Heart left ventricle (tissue), 16 donors: ENCODE measurements at regions of chr6 and their contacts with region 1.

Region 1: DNA sequence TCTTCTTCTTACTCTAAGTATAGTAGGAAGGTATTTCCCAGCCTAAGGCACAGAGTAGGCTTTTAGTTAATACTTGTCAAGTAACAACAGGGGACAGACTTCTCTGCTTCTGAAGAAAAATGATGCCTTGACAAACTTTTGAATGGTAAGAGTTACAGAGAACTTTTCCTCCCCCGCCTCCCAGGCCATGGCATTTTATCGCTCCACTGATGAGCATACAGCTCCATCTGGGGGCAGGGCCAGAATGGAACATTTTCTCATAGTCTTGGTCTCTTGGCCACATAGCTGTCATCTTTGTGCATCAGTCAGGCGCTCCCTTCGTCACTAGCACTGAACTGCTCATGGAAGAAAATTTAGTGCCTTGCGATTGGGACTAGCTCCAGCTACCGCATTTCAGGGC is 1066.8 kb upstream of the CITED2 start:
- DNase-seq: peak; percentile 60 to 77 (median 73)
- ATAC-seq: peak; percentile 71 to 98 (median 96)
- H3K4me3 ChIP-seq: no peak overlapping the region
- H3K27ac ChIP-seq: peak overlapping the region in 10 of 12 donors; percentile 14 to 70 (median 36)
- H3K4me1 ChIP-seq: peaks cover 0 to 36% (median 15%) of the 10 kb centered on the region in 12 donors
- H3K27me3 ChIP-seq: no peaks in the 10 kb centered on the region
- CTCF ChIP-seq: peak; percentile 39 to 77 (median 66)
- POLR2A ChIP-seq: no peak

Region 2: GRCh38 chr6:139764498-139764986 is 676.7 kb before region 1 on chr6:
- intact Hi-C with region 1: loop called in 1 of 10 experiments (anchors 10 kb)
- DNase-seq: peak in 4 of 5 donors; percentile 36 to 41 (median 40)
- ATAC-seq: peak; percentile 91 to 99 (median 98)
- H3K4me3 ChIP-seq: no peak overlapping the region
- H3K27ac ChIP-seq: peak overlapping the region; percentile 43 to 89 (median 81)
- H3K4me1 ChIP-seq: peaks cover 0 to 42% (median 22%) of the 10 kb centered on the region in 12 donors
- H3K27me3 ChIP-seq: no peaks in the 10 kb centered on the region
- CTCF ChIP-seq: no peak
- POLR2A ChIP-seq: no peak

Region 3: DNA sequence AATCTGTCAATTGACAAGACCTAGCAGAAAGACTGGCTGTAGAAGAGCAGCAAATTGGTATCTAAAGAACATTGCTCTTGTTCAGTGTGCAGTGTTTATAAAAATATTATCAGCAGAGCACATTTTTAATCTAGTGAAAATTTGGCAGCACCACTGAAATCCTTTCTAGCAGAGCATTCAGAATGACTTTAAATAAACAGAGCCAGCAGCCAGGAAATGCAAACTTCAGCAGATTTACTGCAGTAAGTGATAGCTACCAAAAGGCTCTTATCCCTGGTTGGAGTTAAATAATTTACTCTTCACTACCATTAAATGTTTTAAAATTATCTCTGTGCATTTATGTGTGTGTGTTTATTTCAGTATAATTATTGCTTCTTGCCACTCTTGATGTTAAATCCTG is 475.9 kb before region 1 on chr6:
- intact Hi-C with region 1: loop called in 2 of 10 experiments (anchors 10 kb)
- DNase-seq: no peak
- ATAC-seq: peak; percentile 26 to 62 (median 44)
- H3K4me3 ChIP-seq: no peak overlapping the region
- H3K27ac ChIP-seq: peak overlapping the region in 10 of 12 donors; percentile 3 to 60 (median 40)
- H3K4me1 ChIP-seq: peaks cover 0 to 45% (median 10%) of the 10 kb centered on the region in 12 donors
- H3K27me3 ChIP-seq: no peaks in the 10 kb centered on the region
- CTCF ChIP-seq: no peak
- POLR2A ChIP-seq: no peak

Region 4: DNA sequence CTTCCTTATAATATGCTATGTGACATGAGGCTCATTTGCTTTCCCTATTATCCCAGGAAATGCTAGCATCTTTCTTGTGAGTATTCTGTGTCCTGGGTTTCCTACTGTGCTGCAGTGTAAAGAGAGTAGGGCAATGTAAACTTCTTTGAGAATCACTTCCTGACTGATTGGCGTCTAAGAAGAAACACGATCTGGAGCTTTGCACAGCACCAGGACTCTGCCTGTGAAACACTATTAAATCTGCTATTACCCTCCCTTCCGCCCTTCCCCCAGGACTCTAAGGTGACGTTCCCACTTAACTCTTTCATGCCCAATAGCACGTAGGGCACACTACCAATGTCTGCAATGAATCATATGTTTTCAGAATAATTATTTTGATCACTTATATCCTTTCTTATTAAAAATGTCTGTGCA is 459.5 kb before region 1 on chr6:
- intact Hi-C with region 1: loop called in 2 of 10 experiments (anchors 2 to 10 kb)
- DNase-seq: peak in 2 of 5 donors; percentile 22 to 26
- ATAC-seq: peak; percentile 38 to 71 (median 60)
- H3K4me3 ChIP-seq: no peak overlapping the region
- H3K27ac ChIP-seq: peak overlapping the region in 11 of 12 donors; percentile 1 to 71 (median 50)
- H3K4me1 ChIP-seq: peaks cover 0 to 61% (median 33%) of the 10 kb centered on the region in 12 donors
- H3K27me3 ChIP-seq: no peaks in the 10 kb centered on the region
- CTCF ChIP-seq: no peak
- POLR2A ChIP-seq: no peak

Region 5: DNA sequence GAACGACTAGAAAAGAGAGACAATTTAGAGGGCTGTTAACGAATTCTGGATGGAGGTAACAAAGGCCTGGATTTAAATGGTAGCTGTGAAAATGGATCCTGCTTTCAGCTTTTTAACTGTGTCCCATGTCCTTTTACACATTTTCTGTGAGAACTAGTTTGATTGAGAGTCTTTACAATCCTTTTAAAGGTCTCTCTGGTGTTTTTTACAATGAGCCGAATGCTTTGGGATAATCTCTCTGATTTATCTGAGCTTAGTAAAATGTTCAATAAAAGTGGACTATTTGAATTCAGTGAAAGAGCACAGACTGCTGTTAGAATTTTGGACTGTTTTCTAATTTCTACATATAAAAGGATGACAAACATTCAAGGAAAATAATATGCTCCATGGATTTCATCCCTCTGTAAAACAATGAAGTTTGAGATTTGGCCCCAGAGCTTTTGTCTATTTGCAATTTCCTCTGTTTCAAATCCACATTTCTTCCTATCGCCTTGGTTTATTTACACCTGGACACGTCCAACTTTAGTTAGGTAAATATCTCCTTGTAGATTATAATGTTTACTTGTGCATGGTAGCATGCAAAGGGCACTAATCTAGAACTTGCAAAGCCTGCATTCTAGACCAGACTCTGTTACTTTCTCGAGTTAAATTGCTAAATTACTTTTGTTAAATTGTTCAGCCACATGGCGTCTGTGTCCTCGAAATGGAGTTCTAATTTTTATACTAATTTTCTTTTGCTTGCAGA is 195.8 kb before region 1 on chr6:
- intact Hi-C with region 1: no loop called
- DNase-seq: no peak
- ATAC-seq: no peak
- H3K4me3 ChIP-seq: no peak overlapping the region
- H3K27ac ChIP-seq: no peak overlapping the region
- H3K4me1 ChIP-seq: no peaks in the 10 kb centered on the region
- H3K27me3 ChIP-seq: no peaks in the 10 kb centered on the region
- CTCF ChIP-seq: no peak
- POLR2A ChIP-seq: no peak

Region 6: GRCh38 chr6:140366989-140367388 is 74.3 kb before region 1 on chr6:
- intact Hi-C with region 1: no loop called
- DNase-seq: no peak
- ATAC-seq: no peak
- H3K4me3 ChIP-seq: no peak overlapping the region
- H3K27ac ChIP-seq: no peak overlapping the region
- H3K4me1 ChIP-seq: peaks cover 0 to 11% (median 3%) of the 10 kb centered on the region in 12 donors
- H3K27me3 ChIP-seq: no peaks in the 10 kb centered on the region
- CTCF ChIP-seq: no peak
- POLR2A ChIP-seq: no peak

Region 7: DNA sequence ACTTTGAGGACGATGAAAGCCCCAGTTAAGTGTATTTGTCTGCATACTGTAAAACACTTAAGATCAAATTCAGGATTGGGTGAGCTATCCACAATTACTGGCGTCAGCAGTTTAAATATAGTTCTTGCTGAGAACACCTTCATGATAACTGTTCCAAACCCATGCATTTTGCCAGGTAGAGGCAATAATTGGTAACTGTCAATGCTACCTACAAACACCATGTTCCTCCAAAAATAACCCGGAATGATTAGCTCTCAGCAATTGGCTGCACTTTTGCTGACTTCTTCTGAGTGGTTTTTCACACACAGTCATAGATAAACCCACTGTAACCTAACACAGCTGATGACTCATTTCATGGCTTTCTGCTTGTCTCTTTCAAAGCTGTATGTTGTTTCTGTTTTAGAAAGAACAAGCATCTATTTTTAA is 332.8 kb after region 1 on chr6:
- intact Hi-C with region 1: loop called in 1 of 10 experiments (anchors 5 kb)
- DNase-seq: peak in 4 of 5 donors; percentile 34 to 44 (median 36)
- ATAC-seq: peak; percentile 95 to 99 (median 98)
- H3K4me3 ChIP-seq: no peak overlapping the region
- H3K27ac ChIP-seq: peak overlapping the region; percentile 29 to 86 (median 64)
- H3K4me1 ChIP-seq: peaks cover 0 to 25% (median 8%) of the 10 kb centered on the region in 12 donors
- H3K27me3 ChIP-seq: no peaks in the 10 kb centered on the region
- CTCF ChIP-seq: no peak
- POLR2A ChIP-seq: no peak

Region 8: GRCh38 chr6:140921366-140922226 is 480.3 kb after region 1 on chr6:
- intact Hi-C with region 1: loop called in 2 of 10 experiments (anchors 2 to 10 kb)
- DNase-seq: peak in 1 of 5 donors; percentile 21
- ATAC-seq: peak in 3 of 4 donors; percentile 74 to 78 (median 78)
- H3K4me3 ChIP-seq: no peak overlapping the region
- H3K27ac ChIP-seq: no peak overlapping the region
- H3K4me1 ChIP-seq: no peaks in the 10 kb centered on the region
- H3K27me3 ChIP-seq: no peaks in the 10 kb centered on the region
- CTCF ChIP-seq: peak in 11 of 12 donors; percentile 41 to 74 (median 57)
- POLR2A ChIP-seq: no peak